ENCODE measurements at regions of chr11 and their contacts with region 1.

Region 1: DNA sequence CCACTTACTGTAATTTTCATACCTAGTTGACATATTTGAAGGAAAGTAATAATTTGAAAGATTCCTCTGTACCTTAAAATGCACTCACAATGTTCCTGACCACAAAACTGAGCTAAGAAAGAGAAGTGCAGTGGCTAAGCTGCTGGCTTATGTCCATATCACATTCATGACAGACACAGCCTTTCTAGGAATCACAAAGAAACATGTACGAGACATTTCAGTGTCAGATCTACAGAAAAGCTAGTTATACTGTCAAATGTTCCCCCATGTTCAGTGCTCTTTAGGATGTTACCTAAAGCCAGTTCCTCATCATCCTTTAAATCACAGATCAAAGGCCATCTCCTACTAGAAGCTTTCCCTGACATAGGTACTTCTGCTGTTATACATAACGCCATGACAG is 142.2 kb upstream of the C11orf58 start:
- DNase-seq: no peak
- H3K4me3 ChIP-seq: no peak overlapping the region
- H3K27me3 ChIP-seq: peaks cover 2% of the 10 kb centered on the region; the same call in 1 of the 2 replicates
- CTCF ChIP-seq: no peak

Region 2: DNA sequence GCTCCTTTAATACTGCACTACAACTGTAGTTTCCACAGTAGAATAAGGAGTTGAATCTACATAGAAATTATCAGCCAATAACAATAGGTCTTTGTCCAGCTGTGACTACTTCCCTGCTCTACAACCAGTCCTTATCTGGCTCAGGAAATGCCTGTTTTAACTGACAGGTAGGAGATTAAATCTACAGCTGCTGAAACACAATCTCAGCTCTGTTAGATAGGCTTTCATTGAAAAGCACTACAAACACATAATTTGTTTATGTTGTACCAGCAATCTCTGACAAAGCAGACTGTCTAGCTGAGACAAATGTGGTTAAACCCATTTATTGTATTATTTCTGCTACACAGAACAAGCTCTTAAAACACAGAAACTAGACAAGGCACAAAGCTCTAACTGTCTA is 469.9 kb before region 1 on chr11:
- CTCF ChIA-PET with region 1: no interaction called
- POLR2A ChIA-PET with region 1: interaction called, 20 read pairs
- DNase-seq: no peak
- H3K4me3 ChIP-seq: no peak overlapping the region
- H3K27me3 ChIP-seq: no peaks in the 10 kb centered on the region
- CTCF ChIP-seq: no peak

Measured in BJ (cell line).